Activated B cell treated with CpG ODN at 0.5 μM for 24 hours (primary cell): ENCODE measurements at regions of chr6 and their contacts with region 1.

Region 1: GRCh38 chr6:28167926-28168325 is 26.2 kb downstream of the ZKSCAN8 start:
- DNase-seq: no peak
- ATAC-seq: no peak
- H3K4me3 Mint-ChIP-seq: no peak overlapping the region
- H3K27ac Mint-ChIP-seq: no peak overlapping the region
- H3K4me1 Mint-ChIP-seq: no peaks in the 10 kb centered on the region
- H3K27me3 Mint-ChIP-seq: no peaks in the 10 kb centered on the region
- CTCF ChIP-seq: no peak

Region 2: DNA sequence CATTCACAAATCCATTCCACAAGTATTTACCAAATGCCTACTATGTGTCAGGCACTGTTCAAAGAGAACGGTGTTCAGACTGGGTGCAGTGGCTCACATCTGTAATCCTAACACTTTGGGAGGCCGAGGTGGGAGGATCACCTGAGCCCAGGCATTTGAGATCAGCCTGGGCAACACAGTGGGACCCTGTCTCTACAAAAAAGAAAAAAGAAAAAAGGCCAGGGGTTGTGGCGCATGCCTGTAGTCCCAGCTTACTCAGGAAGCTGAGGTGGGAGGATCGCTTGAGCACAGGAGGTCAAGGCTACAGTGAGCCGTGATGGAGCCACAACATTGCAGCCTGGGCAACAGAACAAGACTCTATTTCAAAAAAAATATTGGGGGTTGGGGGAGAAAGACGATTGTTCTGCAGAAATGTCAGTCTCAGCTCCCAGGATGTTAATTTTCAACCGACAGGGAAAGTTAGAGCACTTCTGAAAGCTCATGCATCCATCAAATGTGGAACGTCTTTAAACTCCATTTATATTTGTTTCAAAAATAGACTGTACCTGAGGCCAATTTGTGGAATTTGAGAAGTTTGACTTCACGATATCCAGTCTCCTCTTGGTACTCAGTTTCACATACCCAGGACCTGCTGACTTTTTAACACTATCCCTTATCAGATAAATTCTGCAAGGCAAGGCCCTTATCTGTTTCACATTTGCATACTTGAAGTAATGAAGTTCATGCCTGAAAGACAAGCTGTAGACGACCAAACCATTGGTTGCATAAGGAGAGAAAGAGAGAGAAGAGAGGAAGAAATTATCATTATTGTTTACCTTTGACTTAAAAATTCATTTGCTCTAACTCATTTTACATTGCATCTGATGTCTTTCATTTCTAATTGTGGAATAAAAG is 1817.7 kb before region 1 on chr6:
- CTCF ChIA-PET with region 1: no interaction called
- POLR2A ChIA-PET with region 1: interaction called, 10 read pairs
- intact Hi-C with region 1: no loop called
- DNase-seq: no peak
- ATAC-seq: no peak
- H3K4me3 Mint-ChIP-seq: no peak overlapping the region
- H3K27ac Mint-ChIP-seq: no peak overlapping the region
- H3K4me1 Mint-ChIP-seq: no peaks in the 10 kb centered on the region
- H3K27me3 Mint-ChIP-seq: peaks cover 30% of the 10 kb centered on the region
- CTCF ChIP-seq: no peak